Activated CD4-positive, alpha-beta memory T cell treated with anti-CD3 and anti-CD28 coated beads for 36 hours (primary cell): ENCODE measurements at regions of chr3 and their contacts with region 1.

Region 1: DNA sequence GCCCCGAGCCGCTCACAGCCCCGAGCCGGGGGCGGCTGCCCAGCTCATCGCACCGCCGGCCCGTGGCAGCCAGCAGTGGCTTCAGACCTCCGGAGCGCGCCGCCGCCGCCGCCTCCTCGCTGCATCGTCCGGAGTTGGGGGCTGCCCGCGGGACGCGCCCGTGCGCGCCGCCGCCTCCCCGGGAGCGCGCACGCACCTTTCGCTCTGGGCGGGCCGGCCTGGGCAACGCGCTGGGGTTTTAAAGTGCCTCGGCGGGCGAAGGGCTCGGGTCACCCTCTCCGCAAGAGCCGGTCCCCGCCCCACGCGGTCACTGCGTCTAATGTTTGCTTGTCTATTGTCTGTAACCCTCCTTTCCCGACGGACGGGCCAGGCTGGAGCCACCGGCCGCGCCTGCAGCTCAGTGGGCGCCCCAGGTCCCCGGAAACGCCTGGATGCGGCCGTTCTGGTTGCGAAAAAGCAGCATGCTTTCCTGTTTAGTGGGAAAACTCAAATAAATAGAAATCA is at the start of gene RYK:
- DNase-seq: peak; percentile 82
- H3K4me3 Mint-ChIP-seq: peak within 1 kb of the TSS; percentile 90
- H3K27ac Mint-ChIP-seq: peak within 1 kb of the TSS; percentile 85
- H3K4me1 Mint-ChIP-seq: peaks cover 56% of the 10 kb centered on the region
- H3K27me3 Mint-ChIP-seq: peaks cover 5% of the 10 kb centered on the region
- total RNA-seq, gene RYK: 16.7 to 17.6 TPM

Region 2: GRCh38 chr3:134232151-134232550 is 18.6 kb before region 1 on chr3:
- CTCF ChIA-PET with region 1: no interaction called
- POLR2A ChIA-PET with region 1: interaction called, 4 read pairs
- intact Hi-C with region 1: loop called (anchors 2 kb)
- DNase-seq: no peak
- H3K4me3 Mint-ChIP-seq: no peak overlapping the region
- H3K27ac Mint-ChIP-seq: peak overlapping the region; percentile 5
- H3K4me1 Mint-ChIP-seq: peaks cover 57% of the 10 kb centered on the region
- H3K27me3 Mint-ChIP-seq: no peaks in the 10 kb centered on the region

Region 3: DNA sequence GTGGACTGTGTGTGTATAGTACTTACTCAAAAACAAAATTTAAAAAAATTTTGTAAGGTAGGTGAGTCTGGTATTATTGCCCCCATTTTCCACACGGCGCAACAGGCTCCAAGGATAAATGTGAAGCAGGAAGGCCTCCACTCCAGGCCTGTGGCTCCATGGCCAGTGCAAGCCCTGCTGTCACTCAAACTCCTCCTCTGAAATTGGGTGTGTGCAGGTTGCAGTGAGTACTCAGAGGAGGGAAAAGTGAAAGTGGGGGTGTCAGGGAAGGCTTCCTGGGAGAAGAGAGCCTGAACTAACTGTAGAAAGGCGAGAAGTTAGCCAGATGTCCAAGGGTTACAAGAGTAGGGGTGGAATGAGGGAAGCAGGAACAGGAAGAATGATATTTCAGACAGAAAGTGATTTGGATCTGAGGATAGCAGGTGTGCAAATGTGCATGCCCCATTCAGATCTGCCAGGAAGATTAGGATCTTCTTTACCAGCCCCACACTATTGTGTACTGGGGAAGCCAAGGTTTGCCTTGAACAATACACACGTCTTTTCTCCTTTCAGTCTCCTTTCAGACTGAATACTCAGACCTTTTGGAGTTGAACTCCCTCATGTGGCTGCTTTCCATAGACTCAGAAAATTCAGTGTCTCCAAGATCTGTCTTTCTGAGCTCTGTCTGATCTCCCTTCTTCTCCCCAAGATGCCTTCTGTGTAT is 48.6 kb after region 1 on chr3:
- CTCF ChIA-PET with region 1: interaction called, 3 read pairs
- POLR2A ChIA-PET with region 1: interaction called, 4 read pairs
- intact Hi-C with region 1: loop called (anchors 1 kb)
- DNase-seq: no peak
- H3K4me3 Mint-ChIP-seq: no peak overlapping the region
- H3K27ac Mint-ChIP-seq: no peak overlapping the region
- H3K4me1 Mint-ChIP-seq: no peaks in the 10 kb centered on the region
- H3K27me3 Mint-ChIP-seq: peaks cover 21% of the 10 kb centered on the region

Region 4: GRCh38 chr3:134333522-134334181 is 82.9 kb after region 1 on chr3:
- CTCF ChIA-PET with region 1: no interaction called
- POLR2A ChIA-PET with region 1: no interaction called
- intact Hi-C with region 1: no loop called
- DNase-seq: no peak
- H3K4me3 Mint-ChIP-seq: no peak overlapping the region
- H3K27ac Mint-ChIP-seq: no peak overlapping the region
- H3K4me1 Mint-ChIP-seq: no peaks in the 10 kb centered on the region
- H3K27me3 Mint-ChIP-seq: peaks cover 3% of the 10 kb centered on the region